Activated CD8-positive, alpha-beta T cell treated with anti-CD3 and anti-CD28 coated beads, Interleukin-2, amount 10 ng/mL, durations not matched to agents 7 days and 5 days (primary cell): ENCODE measurements at regions of chr10 and their contacts with region 1.

Region 1: GRCh38 chr10:78047314-78047891 is 13.7 kb downstream of the RPS24 start:
- DNase-seq: peak; percentile 91
- ATAC-seq: peak; percentile 89
- H3K4me3 Mint-ChIP-seq: no peak overlapping the region
- H3K27ac Mint-ChIP-seq: peak overlapping the region; percentile 26
- H3K4me1 Mint-ChIP-seq: peaks cover 30% of the 10 kb centered on the region
- H3K27me3 Mint-ChIP-seq: no peaks in the 10 kb centered on the region

Region 2: DNA sequence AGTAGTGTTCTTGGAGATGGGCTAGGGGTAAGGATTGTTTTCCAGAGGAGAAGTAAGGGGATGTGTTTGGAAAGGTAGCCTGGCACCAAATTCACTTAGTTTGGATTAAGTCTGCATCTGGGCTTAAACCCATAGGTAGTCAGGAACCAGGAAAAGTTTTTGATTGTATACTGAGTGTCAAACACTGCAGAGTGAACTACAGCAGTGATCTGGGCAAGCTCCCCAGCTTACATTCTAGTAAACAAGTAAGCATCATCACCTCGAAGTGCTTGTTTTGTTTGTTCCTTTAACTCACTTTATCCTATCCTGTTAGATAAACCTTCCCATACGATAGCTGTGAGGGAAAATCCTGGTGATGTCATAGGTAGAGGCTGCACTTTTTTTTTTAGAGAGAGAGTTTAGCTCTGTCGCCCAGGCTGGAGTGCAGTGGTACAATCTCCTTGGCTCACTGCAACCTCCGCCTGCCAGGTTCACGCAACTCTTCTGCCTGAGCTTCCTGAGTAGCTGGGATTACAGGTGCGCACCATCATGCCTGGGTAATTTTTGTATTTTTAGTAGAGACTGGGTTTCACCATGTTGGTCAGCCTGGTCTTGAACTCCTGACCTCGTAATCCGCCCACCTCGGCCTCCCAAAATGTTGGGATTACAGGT is 11.3 kb before region 1 on chr10:
- CTCF ChIA-PET with region 1: interaction called, 10 read pairs
- POLR2A ChIA-PET with region 1: interaction called, 7 read pairs
- DNase-seq: no peak
- ATAC-seq: no peak
- H3K4me3 Mint-ChIP-seq: peak overlapping the region; percentile 80
- H3K27ac Mint-ChIP-seq: peak overlapping the region; percentile 24
- H3K4me1 Mint-ChIP-seq: peaks cover 51% of the 10 kb centered on the region
- H3K27me3 Mint-ChIP-seq: no peaks in the 10 kb centered on the region

Region 3: DNA sequence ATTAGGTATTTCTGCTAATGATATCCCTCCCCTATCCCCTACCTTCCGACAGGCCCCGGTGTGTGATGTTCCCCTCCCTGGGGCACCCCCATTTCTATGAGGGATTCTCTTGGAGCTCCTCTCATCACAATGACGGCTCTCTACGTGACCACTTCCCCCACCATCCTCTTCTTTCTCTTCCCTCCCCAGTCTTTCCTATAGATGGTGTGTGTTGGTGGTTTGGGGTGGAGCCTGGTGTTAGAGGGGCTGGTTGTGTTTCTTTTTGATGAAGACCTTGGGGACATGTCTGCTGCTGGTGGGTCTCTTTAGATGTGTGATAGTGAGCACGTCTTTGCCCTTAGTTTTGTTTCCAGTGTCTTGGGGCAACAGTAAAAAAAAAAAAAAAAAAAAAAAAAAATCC is 14.9 kb after region 1 on chr10:
- CTCF ChIA-PET with region 1: interaction called, 11 read pairs
- POLR2A ChIA-PET with region 1: no interaction called
- DNase-seq: peak; percentile 82
- ATAC-seq: peak; percentile 93
- H3K4me3 Mint-ChIP-seq: peak overlapping the region; percentile 56
- H3K27ac Mint-ChIP-seq: peak overlapping the region; percentile 88
- H3K4me1 Mint-ChIP-seq: peaks cover 62% of the 10 kb centered on the region
- H3K27me3 Mint-ChIP-seq: no peaks in the 10 kb centered on the region

Region 4: DNA sequence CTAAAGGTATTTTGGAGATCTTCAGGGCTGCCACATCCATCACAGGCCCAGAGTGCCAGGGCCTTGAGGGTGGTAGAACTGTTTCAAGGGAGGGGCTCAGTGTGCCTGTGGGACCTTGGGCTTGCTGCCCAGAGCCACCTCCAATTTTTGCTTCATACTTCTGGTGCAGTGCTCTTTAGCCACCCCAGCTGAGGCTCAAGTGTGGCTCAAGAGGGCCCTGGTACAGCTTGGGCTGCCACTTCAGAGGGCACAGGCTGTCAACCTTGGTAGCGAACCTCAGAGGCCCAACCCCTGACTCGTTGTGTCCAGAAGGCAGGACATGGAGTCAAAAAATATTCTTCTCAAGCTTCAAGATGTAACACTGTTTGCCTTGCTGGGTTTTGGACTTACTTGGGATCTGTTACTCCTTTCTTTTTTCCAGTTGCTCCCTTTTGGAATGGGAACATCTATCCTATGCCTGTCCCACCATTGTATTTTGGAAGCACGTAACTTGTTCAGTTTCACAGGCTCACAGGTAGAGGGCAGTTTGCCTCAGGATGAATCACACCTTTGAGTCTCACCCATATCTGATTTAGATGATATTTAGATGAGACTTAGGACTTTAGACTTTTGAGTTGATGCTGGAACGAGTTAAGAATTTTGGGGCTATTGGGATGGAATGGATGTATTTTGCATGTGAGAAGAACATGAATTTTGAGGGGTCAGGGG is 211.1 kb after region 1 on chr10:
- CTCF ChIA-PET with region 1: no interaction called
- POLR2A ChIA-PET with region 1: no interaction called
- DNase-seq: no peak
- ATAC-seq: no peak
- H3K4me3 Mint-ChIP-seq: no peak overlapping the region
- H3K27ac Mint-ChIP-seq: no peak overlapping the region
- H3K4me1 Mint-ChIP-seq: no peaks in the 10 kb centered on the region
- H3K27me3 Mint-ChIP-seq: peaks cover 22% of the 10 kb centered on the region

Region 5: GRCh38 chr10:78302989-78303854 is 255.8 kb after region 1 on chr10:
- CTCF ChIA-PET with region 1: interaction called, 21 read pairs
- POLR2A ChIA-PET with region 1: no interaction called
- DNase-seq: peak; percentile 96
- ATAC-seq: peak; percentile 96
- H3K4me3 Mint-ChIP-seq: peak overlapping the region; percentile 86
- H3K27ac Mint-ChIP-seq: peak overlapping the region; percentile 97
- H3K4me1 Mint-ChIP-seq: peaks cover 34% of the 10 kb centered on the region
- H3K27me3 Mint-ChIP-seq: peaks cover 18% of the 10 kb centered on the region

Region 6: GRCh38 chr10:78657163-78657861 is 609.9 kb after region 1 on chr10:
- CTCF ChIA-PET with region 1: interaction called, 25 read pairs
- POLR2A ChIA-PET with region 1: no interaction called
- DNase-seq: peak; percentile 81
- ATAC-seq: peak; percentile 82
- H3K4me3 Mint-ChIP-seq: no peak overlapping the region
- H3K27ac Mint-ChIP-seq: no peak overlapping the region
- H3K4me1 Mint-ChIP-seq: no peaks in the 10 kb centered on the region
- H3K27me3 Mint-ChIP-seq: peaks cover 12% of the 10 kb centered on the region